ENCODE measurements at regions of chr1 and their contacts with region 1.

Region 1: DNA sequence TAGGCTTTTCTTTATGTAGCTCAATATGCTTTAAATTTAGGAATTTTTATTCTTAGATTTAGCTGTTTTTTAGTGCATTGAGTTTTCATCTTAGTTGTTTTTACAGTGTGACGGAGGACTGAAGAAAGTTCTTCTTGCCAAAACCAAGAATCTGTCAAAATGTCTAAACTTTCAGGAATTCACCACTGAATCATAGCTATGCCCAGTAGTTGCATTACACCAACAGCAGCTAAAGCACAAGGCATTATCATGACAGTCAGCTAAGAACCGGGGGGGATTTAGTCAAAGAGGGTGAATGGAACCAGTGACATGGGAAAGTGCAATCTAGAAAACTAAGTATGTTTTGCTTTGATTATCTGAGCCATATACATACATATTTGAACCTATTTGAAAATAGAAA is 6.5 kb upstream of the C1orf146 start:
- DNase-seq: no peak
- H3K4me3 ChIP-seq: no peak overlapping the region
- H3K27ac ChIP-seq: no peak overlapping the region
- H3K4me1 ChIP-seq: no peaks in the 10 kb centered on the region
- CTCF ChIP-seq: no peak

Region 2: DNA sequence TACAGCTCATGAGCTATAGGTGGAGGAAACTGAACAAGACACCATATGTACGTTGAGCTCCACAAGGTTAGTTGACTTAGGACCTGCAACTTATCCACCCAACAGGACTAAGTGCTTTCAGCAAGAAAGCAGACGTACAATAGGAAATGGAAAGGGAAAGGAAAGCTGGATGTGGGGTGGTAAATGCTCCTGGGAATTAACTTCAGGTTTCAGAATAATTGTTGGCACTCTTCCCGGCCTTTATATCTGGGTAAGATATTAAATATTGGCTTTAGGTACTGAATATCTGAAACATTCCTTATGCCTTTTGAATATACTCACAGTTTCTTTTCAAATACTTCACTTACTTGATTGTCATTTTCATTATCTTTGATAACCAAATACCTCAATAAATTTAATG is 51.4 kb after region 1 on chr1:
- CTCF ChIA-PET with region 1: no interaction called
- POLR2A ChIA-PET with region 1: no interaction called
- intact Hi-C with region 1: loop called (anchors 5 kb)
- DNase-seq: no peak
- H3K4me3 ChIP-seq: no peak overlapping the region
- H3K27ac ChIP-seq: no peak overlapping the region
- H3K4me1 ChIP-seq: no peaks in the 10 kb centered on the region
- CTCF ChIP-seq: no peak

Measured in OCI-LY7 (cell line).